ENCODE measurements at regions of chr5 and their contacts with region 1.

Region 1: DNA sequence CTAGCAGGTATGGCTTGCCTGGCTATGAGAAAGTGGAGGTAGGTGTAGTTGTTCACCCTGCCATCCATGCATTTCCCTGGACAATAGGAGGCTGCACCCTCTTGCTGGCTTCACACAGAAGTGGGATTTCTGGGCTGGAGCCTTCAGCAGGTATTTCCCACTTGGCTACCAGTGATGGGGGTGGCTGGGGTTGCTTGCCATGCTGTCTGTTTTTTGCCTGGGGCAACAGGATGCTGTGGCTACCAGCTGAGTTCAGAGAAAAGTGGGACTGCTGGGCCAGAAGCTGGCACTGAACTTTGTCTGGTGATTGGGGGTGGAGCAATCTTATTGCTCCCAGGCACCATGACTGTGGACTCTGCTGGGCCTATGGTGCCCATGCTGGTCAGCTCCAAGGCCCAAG is 299.6 kb downstream of the FAM170A start:
- DNase-seq: no peak

Region 2: GRCh38 chr5:119902593-119902992 is 26.4 kb before region 1 on chr5:
- intact Hi-C with region 1: loop called in 1 of 2 experiments (anchors 1 kb)
- DNase-seq: no peak

Region 3: GRCh38 chr5:120955795-120956194 is 1026.8 kb after region 1 on chr5:
- intact Hi-C with region 1: no loop called
- DNase-seq: no peak